Activated naive CD4-positive, alpha-beta T cell treated with anti-CD3 and anti-CD28 coated beads for 36 hours (primary cell): ENCODE measurements at regions of chr19 and their contacts with region 1.

Region 1: DNA sequence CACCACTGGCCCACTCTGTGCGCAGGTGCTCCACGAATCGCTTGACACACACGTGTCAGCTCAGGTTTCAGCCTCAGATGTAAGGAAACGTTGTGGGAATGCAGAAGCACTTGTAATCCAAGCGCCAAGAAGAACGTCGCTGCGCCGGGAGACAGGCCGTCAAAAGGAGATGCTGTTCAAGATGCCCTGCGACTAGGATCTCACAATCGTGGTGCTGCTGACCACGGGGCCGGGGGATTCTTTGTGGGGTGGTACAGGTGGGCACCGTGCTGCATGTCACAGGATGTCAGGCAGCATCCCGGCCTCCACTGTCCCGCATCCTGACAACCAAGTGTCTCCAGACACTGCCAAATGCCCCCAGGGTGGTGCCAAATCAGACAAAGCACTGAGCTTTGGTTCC is 16.9 kb upstream of the SIGLEC11 start:
- DNase-seq: no peak
- H3K4me3 Mint-ChIP-seq: no peak overlapping the region
- H3K27ac Mint-ChIP-seq: no peak overlapping the region
- H3K4me1 Mint-ChIP-seq: no peaks in the 10 kb centered on the region
- H3K27me3 Mint-ChIP-seq: no peaks in the 10 kb centered on the region

Region 2: GRCh38 chr19:49937750-49938381 is 40.0 kb before region 1 on chr19:
- CTCF ChIA-PET with region 1: interaction called, 39 read pairs
- intact Hi-C with region 1: loop called (anchors 1 kb)
- DNase-seq: peak; percentile 83
- H3K4me3 Mint-ChIP-seq: no peak overlapping the region
- H3K27ac Mint-ChIP-seq: no peak overlapping the region
- H3K4me1 Mint-ChIP-seq: peaks cover 14% of the 10 kb centered on the region
- H3K27me3 Mint-ChIP-seq: no peaks in the 10 kb centered on the region

Region 3: DNA sequence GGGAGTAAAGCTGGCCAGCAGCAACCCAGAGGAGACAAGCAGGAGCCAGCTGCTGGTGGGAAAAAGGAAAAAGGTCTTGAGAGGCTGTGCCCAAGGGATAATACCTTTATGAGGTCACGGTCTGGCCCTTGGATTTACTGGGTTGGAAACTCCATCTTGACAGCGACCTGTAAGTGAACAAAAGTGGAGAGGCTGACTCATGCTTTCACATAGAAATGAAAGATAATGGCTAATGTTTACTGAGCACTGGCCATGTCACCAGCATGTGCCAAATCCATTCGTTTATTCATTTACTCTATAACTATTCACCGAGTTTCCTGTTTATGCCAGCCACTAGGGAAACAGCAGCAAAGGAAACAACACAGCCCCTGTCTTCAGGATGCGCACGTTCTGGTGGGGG is 42.6 kb after region 1 on chr19:
- CTCF ChIA-PET with region 1: no interaction called
- intact Hi-C with region 1: no loop called
- DNase-seq: no peak
- H3K4me3 Mint-ChIP-seq: no peak overlapping the region
- H3K27ac Mint-ChIP-seq: peak overlapping the region; percentile 43
- H3K4me1 Mint-ChIP-seq: peaks cover 34% of the 10 kb centered on the region
- H3K27me3 Mint-ChIP-seq: no peaks in the 10 kb centered on the region